HepG2 (cell line): ENCODE measurements at regions of chr2 and their contacts with region 1.

Region 1: GRCh38 chr2:169761251-169761969 is 27.8 kb downstream of the KLHL23 start:
- DNase-seq: peak; percentile 98
- ATAC-seq: peak; percentile 98
- H3K4me3 ChIP-seq: peak overlapping the region; percentile 25 to 35 (median 26); a peak in 5 of 6 replicates
- H3K27ac ChIP-seq: peak overlapping the region; percentile 69
- H3K4me1 ChIP-seq: peaks cover 65% of the 10 kb centered on the region
- H3K27me3 ChIP-seq: no peaks in the 10 kb centered on the region
- CTCF ChIP-seq: no peak
- EP300 ChIP-seq: peak in 1 of 2 experiments; percentile 87; a peak in 2 of 4 replicates
- POLR2A ChIP-seq: peak; percentile 15 to 37; a peak in 1 of 4 replicates
- RAD21 ChIP-seq: no peak

Region 2: GRCh38 chr2:169584005-169584877 is 177.2 kb before region 1 on chr2 and contains the start of gene PPIG:
- CTCF ChIA-PET with region 1: no interaction called
- POLR2A ChIA-PET with region 1: no interaction called
- in situ Hi-C with region 1: no loop called
- intact Hi-C with region 1: loop called (anchors 2 kb)
- DNase-seq: peak; percentile 91
- ATAC-seq: peak; percentile 91
- H3K4me3 ChIP-seq: peak within 1 kb of the TSS; percentile 80 to 99 (median 96)
- H3K27ac ChIP-seq: peak within 1 kb of the TSS; percentile 96
- H3K4me1 ChIP-seq: peaks cover 35% of the 10 kb centered on the region
- H3K27me3 ChIP-seq: peaks cover 0 to 7% of the 10 kb centered on the region in 2 experiments; a peak in 2 of 5 replicates
- CTCF ChIP-seq: peak; percentile 14; the same call in 1 of the 2 replicates
- EP300 ChIP-seq: peak in 1 of 2 experiments; percentile 72; a peak in 2 of 4 replicates
- POLR2A ChIP-seq: peak; percentile 63 to 88
- RAD21 ChIP-seq: no peak
- total RNA-seq, gene PPIG: 81.0 and 133 TPM in 2 replicates

Region 3: DNA sequence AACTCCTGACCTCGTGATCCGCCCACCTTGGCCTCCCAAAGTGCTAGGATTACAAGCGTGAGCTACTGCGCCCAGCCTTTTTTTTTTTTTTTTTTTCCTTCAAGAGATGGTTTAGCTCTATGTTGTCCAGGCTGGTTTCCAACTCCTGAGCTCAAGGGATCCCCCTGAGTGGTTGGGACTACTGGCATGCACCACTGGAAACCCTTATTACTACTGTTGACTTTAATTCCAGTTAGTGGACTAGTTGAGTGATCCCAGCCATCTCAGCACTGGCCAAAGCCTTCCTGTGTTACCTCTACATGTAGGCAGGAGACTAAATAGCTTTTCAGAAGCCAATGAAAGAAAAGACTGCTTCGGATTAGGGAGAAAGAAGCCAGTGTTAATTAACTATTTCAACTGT is 29.2 kb after region 1 on chr2:
- CTCF ChIA-PET with region 1: no interaction called
- POLR2A ChIA-PET with region 1: no interaction called
- in situ Hi-C with region 1: no loop called
- intact Hi-C with region 1: no loop called
- DNase-seq: no peak
- ATAC-seq: no peak
- H3K4me3 ChIP-seq: no peak overlapping the region
- H3K27ac ChIP-seq: no peak overlapping the region
- H3K4me1 ChIP-seq: peaks cover 12% of the 10 kb centered on the region
- H3K27me3 ChIP-seq: no peaks in the 10 kb centered on the region
- CTCF ChIP-seq: no peak
- EP300 ChIP-seq: no peak
- POLR2A ChIP-seq: no peak
- RAD21 ChIP-seq: no peak

Region 4: DNA sequence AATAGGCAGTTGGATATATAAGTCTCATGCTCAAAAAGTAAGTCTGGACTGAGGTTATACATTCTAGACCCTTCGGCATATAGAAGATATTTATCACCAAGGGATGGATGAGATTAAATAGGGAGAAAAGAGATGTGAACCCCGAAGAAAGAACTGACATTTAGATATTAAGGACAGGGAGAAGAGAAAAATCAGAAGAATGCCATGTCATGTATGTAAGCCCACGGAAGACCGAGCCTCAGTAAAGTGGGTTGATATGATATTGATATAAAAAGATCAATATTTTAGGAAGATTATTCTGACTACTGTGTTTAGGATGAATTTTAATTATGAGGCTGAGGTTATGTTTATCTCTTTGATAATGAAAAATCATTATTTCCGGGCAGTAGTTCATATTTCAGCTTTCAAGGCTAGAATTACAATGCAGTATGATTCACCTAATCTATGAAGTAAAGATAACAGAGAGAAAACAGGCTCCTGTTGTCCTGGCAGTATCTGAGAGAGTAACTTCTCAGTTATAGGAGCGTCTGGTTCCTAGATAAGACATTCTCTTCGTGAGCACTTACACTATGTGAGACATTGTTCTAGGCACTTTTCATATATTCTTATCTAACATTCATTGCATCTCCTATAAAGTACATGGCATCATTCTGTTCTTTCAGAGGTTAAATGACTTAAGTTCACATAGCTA is 148.8 kb after region 1 on chr2:
- CTCF ChIA-PET with region 1: no interaction called
- POLR2A ChIA-PET with region 1: no interaction called
- in situ Hi-C with region 1: no loop called
- intact Hi-C with region 1: no loop called
- DNase-seq: no peak
- ATAC-seq: no peak
- H3K4me3 ChIP-seq: no peak overlapping the region
- H3K27ac ChIP-seq: no peak overlapping the region
- H3K4me1 ChIP-seq: no peaks in the 10 kb centered on the region
- H3K27me3 ChIP-seq: no peaks in the 10 kb centered on the region
- CTCF ChIP-seq: no peak
- EP300 ChIP-seq: no peak
- POLR2A ChIP-seq: no peak
- RAD21 ChIP-seq: no peak

Region 5: GRCh38 chr2:170191166-170191866 is 429.9 kb after region 1 on chr2:
- CTCF ChIA-PET with region 1: no interaction called
- POLR2A ChIA-PET with region 1: no interaction called
- in situ Hi-C with region 1: no loop called
- intact Hi-C with region 1: no loop called
- DNase-seq: no peak
- ATAC-seq: no peak
- H3K4me3 ChIP-seq: no peak overlapping the region
- H3K27ac ChIP-seq: no peak overlapping the region
- H3K4me1 ChIP-seq: no peaks in the 10 kb centered on the region
- H3K27me3 ChIP-seq: no peaks in the 10 kb centered on the region
- CTCF ChIP-seq: no peak
- EP300 ChIP-seq: no peak
- POLR2A ChIP-seq: no peak
- RAD21 ChIP-seq: no peak